WTC11 (cell line): ENCODE measurements at regions of chr3 and their contacts with region 1.

Region 1: DNA sequence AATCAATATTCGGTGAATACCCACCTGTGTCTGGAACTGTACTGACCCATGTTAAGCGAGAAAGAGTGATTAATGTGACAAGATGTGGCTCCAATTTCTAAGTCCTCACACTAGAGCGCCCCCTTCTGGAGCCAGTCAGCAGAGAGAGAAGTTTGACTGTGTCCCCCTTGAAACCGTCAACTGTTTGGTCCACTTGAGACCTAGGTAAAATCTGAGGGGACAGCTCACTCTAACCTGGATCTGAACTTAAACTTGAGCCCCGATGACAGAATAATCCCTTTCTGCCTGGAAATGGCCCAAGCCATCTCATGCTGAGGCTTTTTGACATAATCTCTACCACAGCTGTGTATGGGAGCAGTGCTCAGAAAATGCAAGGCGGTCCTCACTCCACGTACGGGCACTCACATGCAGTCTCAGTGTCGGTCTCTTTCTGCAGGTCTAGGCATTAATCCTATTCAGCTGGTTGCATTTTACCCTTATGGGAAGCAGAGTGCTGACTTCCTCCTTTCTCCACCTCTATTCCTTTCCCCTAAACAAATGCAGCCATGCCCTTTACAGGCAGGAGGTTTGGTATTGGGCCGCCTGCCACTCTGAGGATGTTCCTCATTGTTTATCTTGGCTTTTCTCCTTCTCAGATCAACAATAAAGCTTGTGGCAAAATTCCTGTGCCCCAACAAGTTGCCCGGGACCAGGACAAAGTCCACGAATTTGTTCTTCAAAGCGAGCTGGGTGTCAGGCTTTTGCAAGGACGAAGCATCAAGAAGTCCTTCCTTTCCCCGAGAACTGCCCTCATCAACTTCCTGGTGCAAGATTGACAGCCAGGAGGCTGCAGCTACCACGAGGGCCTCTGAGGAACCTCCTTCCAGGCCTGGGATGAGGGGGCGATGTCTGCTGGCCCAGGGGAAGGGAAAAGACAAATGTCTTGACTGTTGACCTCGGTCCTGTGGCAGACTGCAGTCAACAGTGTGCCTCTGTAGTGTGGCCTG is 47.5 kb upstream of the LIMD1 start:
- DNase-seq: peak; percentile 79
- ATAC-seq: peak; percentile 63
- H3K4me3 Mint-ChIP-seq: no peak overlapping the region
- H3K27ac Mint-ChIP-seq: no peak overlapping the region
- H3K4me1 Mint-ChIP-seq: no peaks in the 10 kb centered on the region
- H3K27me3 Mint-ChIP-seq: no peaks in the 10 kb centered on the region
- CTCF ChIP-seq: peak; percentile 66; the same call in 1 of the 2 replicates

Region 2: GRCh38 chr3:45496555-45496954 is 50.5 kb before region 1 on chr3:
- CTCF ChIA-PET with region 1: no interaction called
- POLR2A ChIA-PET with region 1: no interaction called
- DNase-seq: no peak
- ATAC-seq: no peak
- H3K4me3 Mint-ChIP-seq: no peak overlapping the region
- H3K27ac Mint-ChIP-seq: peak overlapping the region; percentile 51
- H3K4me1 Mint-ChIP-seq: no peaks in the 10 kb centered on the region
- H3K27me3 Mint-ChIP-seq: no peaks in the 10 kb centered on the region
- CTCF ChIP-seq: no peak

Region 3: GRCh38 chr3:45507820-45508317 is 39.1 kb before region 1 on chr3:
- CTCF ChIA-PET with region 1: interaction called, 23 read pairs
- POLR2A ChIA-PET with region 1: no interaction called
- DNase-seq: peak; percentile 60
- ATAC-seq: peak; percentile 66
- H3K4me3 Mint-ChIP-seq: no peak overlapping the region
- H3K27ac Mint-ChIP-seq: no peak overlapping the region
- H3K4me1 Mint-ChIP-seq: 0 out of 2 replicates have a peak, but pooled peaks cover 3% of the 10 kb centered on the region
- H3K27me3 Mint-ChIP-seq: no peaks in the 10 kb centered on the region
- CTCF ChIP-seq: 0 out of 2 replicates have a peak, but pooled peaks have one; percentile 13

Region 4: DNA sequence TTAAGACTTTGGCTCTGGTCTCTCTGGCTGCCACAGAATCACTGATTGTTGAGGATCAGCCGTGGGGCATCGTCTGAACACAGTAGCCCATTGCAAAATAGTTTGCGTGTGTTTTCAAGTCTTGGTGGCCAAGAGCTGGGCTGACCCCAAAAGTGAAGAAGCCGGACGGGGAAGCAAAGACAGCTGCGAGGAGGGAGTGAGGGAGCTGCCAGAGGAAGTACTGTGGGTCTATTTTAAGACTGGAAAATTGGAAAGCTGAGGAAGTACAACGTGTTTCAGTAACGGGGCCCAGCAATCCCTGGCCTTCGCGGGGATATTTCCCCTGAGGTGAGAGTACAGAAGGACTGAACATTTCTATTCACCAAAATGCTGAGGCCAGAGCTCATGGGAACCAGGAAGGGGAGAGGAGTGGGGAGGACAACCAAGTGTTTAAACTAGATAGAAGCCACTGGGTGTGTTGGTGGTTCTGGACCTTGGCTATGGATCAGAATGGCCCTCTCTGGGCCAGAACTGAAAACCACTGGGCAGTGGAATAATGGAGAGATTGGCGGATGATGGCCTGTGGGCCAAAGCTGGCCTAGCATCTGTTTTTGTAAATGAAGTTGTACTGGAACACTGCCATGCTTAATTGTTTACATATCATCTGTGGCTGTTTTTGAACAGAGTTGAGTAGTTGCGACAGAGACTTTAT is 13.4 kb after region 1 on chr3:
- CTCF ChIA-PET with region 1: interaction called, 17 read pairs
- POLR2A ChIA-PET with region 1: no interaction called
- DNase-seq: no peak
- ATAC-seq: no peak
- H3K4me3 Mint-ChIP-seq: no peak overlapping the region
- H3K27ac Mint-ChIP-seq: peak overlapping the region; percentile 1; the same call in 1 of the 2 replicates
- H3K4me1 Mint-ChIP-seq: no peaks in the 10 kb centered on the region; the same call in 1 of the 2 replicates
- H3K27me3 Mint-ChIP-seq: no peaks in the 10 kb centered on the region; the same call in 1 of the 2 replicates
- CTCF ChIP-seq: no peak

Region 5: DNA sequence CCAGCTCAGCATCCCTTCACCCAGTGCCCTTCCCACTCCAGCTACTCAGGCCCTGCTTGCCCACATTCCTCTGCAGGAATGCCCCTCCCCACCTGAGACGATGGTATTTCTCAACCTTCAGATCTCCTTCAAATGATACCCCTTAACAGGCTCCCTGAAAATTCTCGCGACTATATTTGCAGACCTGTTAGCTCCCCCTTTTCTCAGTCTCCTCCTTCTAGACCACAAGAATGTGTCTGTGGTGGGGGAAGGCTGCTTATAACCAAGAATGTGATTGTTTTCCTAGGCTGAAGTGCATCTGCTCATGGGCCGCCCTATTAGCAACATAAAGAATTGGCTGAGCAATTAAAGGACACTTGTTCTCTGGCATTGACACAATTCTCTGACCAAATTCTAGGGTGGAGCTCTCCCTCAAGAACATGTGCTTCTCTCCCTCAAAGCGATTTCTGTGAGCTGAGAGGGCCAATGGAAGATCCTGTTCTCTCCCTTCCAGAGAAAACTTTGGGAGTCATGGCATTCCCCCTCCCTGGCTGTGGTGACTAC is 28.4 kb after region 1 on chr3:
- CTCF ChIA-PET with region 1: interaction called, 12 read pairs
- POLR2A ChIA-PET with region 1: no interaction called
- DNase-seq: no peak
- ATAC-seq: peak; percentile 46
- H3K4me3 Mint-ChIP-seq: no peak overlapping the region
- H3K27ac Mint-ChIP-seq: peak overlapping the region; percentile 36
- H3K4me1 Mint-ChIP-seq: peaks cover 62% of the 10 kb centered on the region
- H3K27me3 Mint-ChIP-seq: peaks cover 3% of the 10 kb centered on the region; the same call in 1 of the 2 replicates
- CTCF ChIP-seq: no peak

Region 6: GRCh38 chr3:45593708-45594609 is 47.0 kb after region 1 on chr3:
- CTCF ChIA-PET with region 1: interaction called, 13 read pairs
- POLR2A ChIA-PET with region 1: no interaction called
- DNase-seq: peak; percentile 76
- ATAC-seq: peak; percentile 80
- H3K4me3 Mint-ChIP-seq: peak overlapping the region; percentile 77
- H3K27ac Mint-ChIP-seq: no peak overlapping the region
- H3K4me1 Mint-ChIP-seq: peaks cover 38% of the 10 kb centered on the region
- H3K27me3 Mint-ChIP-seq: no peaks in the 10 kb centered on the region
- CTCF ChIP-seq: no peak